SK-N-SH (cell line): ENCODE measurements at regions of chr6 and their contacts with region 1.

Region 1: DNA sequence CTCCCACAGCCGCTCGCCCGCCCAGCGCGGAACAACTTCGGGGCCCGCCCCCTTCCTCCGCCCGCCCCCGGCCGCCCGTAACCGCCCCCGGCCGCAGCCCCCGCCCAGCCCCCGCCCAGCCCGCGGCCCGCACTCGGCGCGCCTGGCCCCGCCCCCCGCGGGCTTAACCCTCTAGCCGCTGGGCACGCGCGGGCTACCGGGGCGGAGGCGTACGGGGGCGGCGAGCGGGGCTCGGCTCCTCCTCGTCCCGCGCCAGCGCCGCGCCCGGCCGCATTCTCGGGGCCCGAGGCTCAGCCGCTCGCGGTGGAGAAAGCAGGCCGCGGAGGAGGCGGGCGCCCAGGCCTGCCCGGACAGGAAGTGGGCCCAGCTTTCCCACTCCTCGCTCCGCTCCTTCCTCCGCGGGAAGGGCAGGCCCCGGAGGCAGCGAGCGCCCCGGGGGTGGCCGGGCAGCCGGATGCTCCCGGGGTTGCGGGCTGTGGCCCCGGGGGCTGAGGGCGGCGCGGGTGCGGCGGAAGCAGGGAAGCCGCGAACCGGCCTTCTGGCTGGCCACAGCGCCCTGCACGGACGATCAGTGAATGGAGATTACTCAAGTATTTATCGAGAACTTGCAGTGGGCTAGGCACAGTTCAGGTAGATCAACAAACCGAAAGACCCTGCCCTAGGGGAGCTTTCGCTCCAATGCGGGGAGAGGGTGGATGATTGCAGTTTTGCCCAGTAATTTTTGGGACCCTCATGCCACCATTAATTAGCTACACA is at the start of gene TRAM2:
- DNase-seq: peak; percentile 98
- H3K4me3 ChIP-seq: peak within 1 kb of the TSS; percentile 88 to 94
- H3K27ac ChIP-seq: peak within 1 kb of the TSS; percentile 96 to 98
- H3K4me1 ChIP-seq: peaks cover 29 to 38% of the 10 kb centered on the region in 2 experiments
- H3K27me3 ChIP-seq: no peaks in the 10 kb centered on the region
- CTCF ChIP-seq: peak; percentile 30; the same call in 1 of the 2 replicates
- EP300 ChIP-seq: no peak
- RAD21 ChIP-seq: no peak
- polyA plus RNA-seq, gene TRAM2: 26.4 and 36.0 TPM in 2 replicates

Region 2: GRCh38 chr6:52522151-52522626 is 55.0 kb before region 1 on chr6:
- CTCF ChIA-PET with region 1: interaction called, 12 read pairs
- POLR2A ChIA-PET with region 1: no interaction called
- DNase-seq: peak; percentile 39
- H3K4me3 ChIP-seq: no peak overlapping the region
- H3K27ac ChIP-seq: peak overlapping the region; percentile 68 to 76
- H3K4me1 ChIP-seq: peaks cover 41 to 50% of the 10 kb centered on the region in 2 experiments
- H3K27me3 ChIP-seq: no peaks in the 10 kb centered on the region
- CTCF ChIP-seq: no peak; the same call in 1 of the 2 replicates
- EP300 ChIP-seq: 0 out of 4 replicates have a peak, but pooled peaks of 1 of the 2 experiments have one; percentile 8
- RAD21 ChIP-seq: no peak

Region 3: DNA sequence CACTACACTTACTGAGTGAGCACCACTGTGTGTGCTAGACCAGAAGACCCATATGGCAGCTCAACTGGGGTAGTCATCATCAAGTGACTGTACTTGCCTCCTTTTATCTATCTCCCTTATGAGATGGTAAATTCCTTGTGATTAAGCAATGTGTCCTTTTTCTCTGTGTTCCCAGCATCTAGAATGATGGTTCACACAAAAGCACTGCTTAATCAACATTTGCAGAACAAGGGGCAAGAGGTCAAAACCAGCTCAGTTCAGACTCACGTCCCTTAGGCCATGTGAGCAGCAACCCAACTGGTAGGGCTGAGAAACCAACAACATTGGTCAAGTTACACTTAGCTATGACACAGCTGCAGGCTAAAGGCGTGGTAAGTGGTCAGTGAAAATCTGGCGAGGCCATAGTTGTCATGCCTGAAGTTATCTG is 10.3 kb before region 1 on chr6:
- CTCF ChIA-PET with region 1: interaction called, 21 read pairs
- POLR2A ChIA-PET with region 1: interaction called, 5 read pairs
- DNase-seq: no peak
- H3K4me3 ChIP-seq: no peak overlapping the region
- H3K27ac ChIP-seq: 0 out of 4 replicates have a peak overlapping the region, but pooled peaks of 1 of the 2 experiments have one; percentile 17
- H3K4me1 ChIP-seq: peaks cover 17 to 41% of the 10 kb centered on the region in 2 experiments
- H3K27me3 ChIP-seq: no peaks in the 10 kb centered on the region
- CTCF ChIP-seq: no peak
- EP300 ChIP-seq: no peak
- RAD21 ChIP-seq: no peak

Region 4: GRCh38 chr6:52598123-52598823 is 21.1 kb after region 1 on chr6:
- CTCF ChIA-PET with region 1: interaction called, 86 read pairs
- POLR2A ChIA-PET with region 1: interaction called, 8 read pairs
- DNase-seq: peak; percentile 74
- H3K4me3 ChIP-seq: peak overlapping the region; percentile 17 to 34; a peak in 2 of 4 replicates
- H3K27ac ChIP-seq: peak overlapping the region; percentile 86 to 97
- H3K4me1 ChIP-seq: peaks cover 47 to 49% of the 10 kb centered on the region in 2 experiments
- H3K27me3 ChIP-seq: no peaks in the 10 kb centered on the region
- CTCF ChIP-seq: peak; percentile 80
- EP300 ChIP-seq: peak in 1 of 2 experiments; percentile 58; a peak in 2 of 4 replicates
- RAD21 ChIP-seq: peak; percentile 81

Region 5: GRCh38 chr6:52640170-52640569 is 63.0 kb after region 1 on chr6:
- CTCF ChIA-PET with region 1: no interaction called
- POLR2A ChIA-PET with region 1: no interaction called
- DNase-seq: no peak
- H3K4me3 ChIP-seq: no peak overlapping the region
- H3K27ac ChIP-seq: no peak overlapping the region
- H3K4me1 ChIP-seq: peaks cover 0 to 14% of the 10 kb centered on the region in 2 experiments; a peak in 1 of 4 replicates
- H3K27me3 ChIP-seq: no peaks in the 10 kb centered on the region
- CTCF ChIP-seq: no peak
- EP300 ChIP-seq: no peak
- RAD21 ChIP-seq: no peak

Region 6: DNA sequence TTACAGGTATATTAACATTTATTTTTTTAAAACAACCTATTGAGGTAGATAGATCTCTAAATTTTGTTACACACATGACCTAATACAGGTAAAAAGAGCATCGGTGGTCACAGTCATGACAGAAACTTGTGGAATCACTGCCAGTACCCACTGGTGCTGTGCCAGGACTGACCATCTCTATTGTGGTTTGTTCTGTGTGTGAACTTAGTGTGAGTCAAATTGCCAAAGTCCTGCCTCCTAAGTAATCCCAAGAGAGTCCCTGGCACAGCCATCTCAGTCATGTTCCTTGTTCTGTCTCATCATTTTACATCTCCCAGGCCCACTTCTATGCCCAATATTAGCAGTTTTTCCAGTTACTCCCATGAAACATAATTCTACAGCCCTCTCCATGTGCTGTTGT is 164.7 kb after region 1 on chr6:
- CTCF ChIA-PET with region 1: no interaction called
- POLR2A ChIA-PET with region 1: no interaction called
- DNase-seq: no peak
- H3K4me3 ChIP-seq: no peak overlapping the region
- H3K27ac ChIP-seq: no peak overlapping the region
- H3K4me1 ChIP-seq: no peaks in the 10 kb centered on the region
- H3K27me3 ChIP-seq: no peaks in the 10 kb centered on the region; the same call in 1 of the 2 replicates
- CTCF ChIP-seq: no peak
- EP300 ChIP-seq: no peak
- RAD21 ChIP-seq: no peak